HEK293 (cell line): ENCODE measurements at regions of chrX and their contacts with region 1.

Region 1: GRCh38 chrX:103629318-103630170 is 769 bp downstream of the TCEAL1 start:
- H3K4me3 ChIP-seq: peak overlapping the region; percentile 73
- H3K27ac ChIP-seq: peak overlapping the region; percentile 84
- H3K4me1 ChIP-seq: peaks cover 4% of the 10 kb centered on the region; the same call in 1 of the 2 replicates
- CTCF ChIP-seq: peak; percentile 91

Region 2: GRCh38 chrX:103585411-103586313 is 43.9 kb before region 1 on chrX and contains the start of gene TCEAL4:
- CTCF ChIA-PET with region 1: interaction called, 3 read pairs
- POLR2A ChIA-PET with region 1: interaction called, 18 read pairs
- H3K4me3 ChIP-seq: peak within 1 kb of the TSS; percentile 55
- H3K27ac ChIP-seq: peak within 1 kb of the TSS; percentile 17; the same call in 1 of the 2 replicates
- H3K4me1 ChIP-seq: no peaks in the 10 kb centered on the region
- CTCF ChIP-seq: no peak

Region 3: DNA sequence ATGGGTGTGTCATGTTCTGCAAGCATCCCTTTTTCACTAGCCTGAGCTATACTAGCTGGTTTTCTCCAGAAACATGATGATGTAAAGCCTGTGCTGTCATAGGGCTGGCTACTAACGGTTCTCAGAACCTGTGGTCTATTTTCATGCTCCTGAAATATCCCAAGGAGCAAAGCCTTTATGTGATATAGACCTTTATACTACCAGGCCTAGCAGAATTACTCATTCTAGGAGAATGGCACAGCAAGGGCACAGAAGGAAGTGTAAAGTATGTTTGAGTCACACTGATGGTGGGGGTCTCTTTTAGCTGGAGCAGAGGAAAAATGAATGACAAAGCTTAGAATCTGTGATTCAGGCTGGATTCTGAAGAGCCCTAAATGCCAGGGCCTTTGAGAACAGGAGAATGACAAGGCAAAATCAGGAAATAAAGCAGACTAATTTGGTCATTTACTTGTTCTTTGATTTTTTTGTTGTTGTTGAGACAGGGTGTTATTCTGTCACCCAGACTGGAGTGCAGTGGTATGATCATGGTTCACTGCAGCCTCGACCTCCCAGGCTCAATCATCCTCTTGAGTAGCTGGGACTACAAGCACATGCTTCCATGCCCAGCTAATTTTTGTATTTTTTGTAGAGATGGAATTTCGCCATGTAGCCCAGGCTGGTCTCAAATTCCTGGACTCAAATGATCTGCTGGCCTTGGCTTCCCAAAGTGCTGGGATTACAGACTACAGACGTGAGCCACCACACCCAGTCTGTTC is 11.0 kb after region 1 on chrX:
- CTCF ChIA-PET with region 1: interaction called, 10 read pairs
- POLR2A ChIA-PET with region 1: interaction called, 3 read pairs
- H3K4me3 ChIP-seq: no peak overlapping the region
- H3K27ac ChIP-seq: no peak overlapping the region
- H3K4me1 ChIP-seq: no peaks in the 10 kb centered on the region
- CTCF ChIP-seq: no peak

Region 4: DNA sequence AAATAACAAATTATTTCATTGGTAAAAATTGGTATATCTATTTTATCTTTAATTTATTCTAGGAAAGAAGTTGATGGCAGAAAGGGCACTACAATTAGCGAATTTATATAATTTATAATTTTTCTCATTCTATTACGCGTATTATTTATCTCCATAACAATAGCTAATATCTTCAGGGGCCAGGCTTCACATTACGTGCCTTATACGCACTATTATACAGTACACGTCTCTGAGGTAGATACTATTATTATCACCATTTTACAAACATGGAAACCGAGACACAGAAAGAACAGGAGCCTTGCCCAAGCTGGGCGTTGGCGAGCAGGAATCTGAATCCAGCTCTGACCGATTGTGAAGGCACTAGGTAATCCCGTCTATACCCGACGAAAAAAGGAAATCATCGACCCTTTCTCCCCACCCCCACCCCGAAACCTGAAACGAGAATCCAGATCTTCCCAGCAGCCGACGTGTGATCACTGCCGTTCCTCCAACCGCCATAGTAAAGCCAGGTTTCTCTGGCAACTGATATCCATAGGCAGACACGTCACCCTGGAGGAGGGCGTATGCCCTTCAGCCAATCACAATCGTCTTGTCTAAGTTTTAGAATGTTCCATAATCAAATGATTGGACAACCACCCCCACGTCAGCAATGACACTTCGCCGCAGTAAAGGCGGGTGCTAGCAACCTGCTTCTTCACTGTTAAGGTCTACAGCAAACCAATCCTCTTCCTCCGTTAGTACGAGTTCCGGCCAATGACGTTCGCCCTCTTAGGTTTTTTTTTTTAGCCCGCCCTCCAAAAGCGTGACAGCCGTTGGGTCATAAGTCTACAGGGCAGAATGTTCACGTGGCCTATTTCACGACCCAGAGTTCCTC is 56.9 kb after region 1 on chrX and contains the start of gene MORF4L2:
- CTCF ChIA-PET with region 1: interaction called, 4 read pairs
- POLR2A ChIA-PET with region 1: interaction called, 11 read pairs
- H3K4me3 ChIP-seq: peak within 1 kb of the TSS; percentile 80
- H3K27ac ChIP-seq: peak within 1 kb of the TSS; percentile 87
- H3K4me1 ChIP-seq: peaks cover 2% of the 10 kb centered on the region; the same call in 1 of the 2 replicates
- CTCF ChIP-seq: no peak